Upper lobe of right lung (tissue), 1 donor: ENCODE measurements at regions of chr19 and their contacts with region 1.

Region 1: DNA sequence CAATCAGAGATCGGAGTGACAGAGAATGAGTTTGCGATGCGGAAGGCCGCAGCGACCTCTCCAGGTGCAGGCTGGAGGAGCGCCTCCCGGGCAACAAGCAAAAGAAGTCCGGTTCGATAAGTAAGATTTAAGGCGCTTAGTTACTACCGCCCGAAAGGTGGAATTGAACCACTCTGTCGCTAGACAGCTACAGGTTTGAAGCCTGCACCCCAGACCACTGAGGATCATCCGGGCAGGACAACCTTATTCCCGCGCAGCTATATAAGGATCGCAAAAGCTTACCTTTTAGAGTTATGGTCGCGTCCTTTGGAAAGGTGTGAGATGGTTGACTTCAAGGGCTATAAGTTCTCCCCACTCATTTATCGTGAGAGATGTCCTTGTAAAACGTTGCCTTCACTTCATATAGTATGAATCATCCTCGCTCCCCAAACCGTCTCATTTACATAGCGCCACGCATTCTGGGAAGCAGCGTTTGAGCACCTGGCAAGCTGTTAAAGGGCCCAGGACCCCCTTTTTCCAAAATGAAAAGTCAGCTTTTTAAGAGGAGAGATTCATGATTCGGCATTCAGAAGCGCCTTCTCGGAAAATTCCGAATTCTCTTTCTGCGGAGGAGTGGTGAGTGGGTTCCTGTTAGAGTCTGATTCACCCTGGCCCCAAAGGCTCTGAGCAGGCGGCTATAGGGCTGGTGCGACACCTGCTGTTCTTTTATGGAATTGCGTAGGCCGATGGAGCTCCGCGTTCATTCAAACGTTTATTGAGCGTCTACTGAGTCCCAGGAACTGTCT is 10.8 kb downstream of the FOSB start:
- DNase-seq: peak; percentile 88
- ATAC-seq: peak; percentile 94
- H3K4me3 ChIP-seq: peak overlapping the region; percentile 50
- H3K27ac ChIP-seq: peak overlapping the region; percentile 98
- H3K4me1 ChIP-seq: peaks cover 6% of the 10 kb centered on the region
- H3K27me3 ChIP-seq: peaks cover 4% of the 10 kb centered on the region
- CTCF ChIP-seq: peak; percentile 96

Region 2: GRCh38 chr19:45391340-45391739 is 87.3 kb before region 1 on chr19:
- intact Hi-C with region 1: no loop called
- DNase-seq: no peak
- ATAC-seq: peak; percentile 43
- H3K4me3 ChIP-seq: no peak overlapping the region
- H3K27ac ChIP-seq: no peak overlapping the region
- H3K4me1 ChIP-seq: no peaks in the 10 kb centered on the region
- H3K27me3 ChIP-seq: peaks cover 4% of the 10 kb centered on the region
- CTCF ChIP-seq: no peak

Region 3: GRCh38 chr19:45439569-45440254 is 38.9 kb before region 1 on chr19:
- intact Hi-C with region 1: loop called (anchors 2 kb)
- DNase-seq: peak; percentile 91
- ATAC-seq: peak; percentile 75
- H3K4me3 ChIP-seq: peak overlapping the region; percentile 72
- H3K27ac ChIP-seq: peak overlapping the region; percentile 87
- H3K4me1 ChIP-seq: peaks cover 12% of the 10 kb centered on the region
- H3K27me3 ChIP-seq: no peaks in the 10 kb centered on the region
- CTCF ChIP-seq: peak; percentile 100